HepG2 (cell line): ENCODE measurements at regions of chr3 and their contacts with region 1.

Region 1: DNA sequence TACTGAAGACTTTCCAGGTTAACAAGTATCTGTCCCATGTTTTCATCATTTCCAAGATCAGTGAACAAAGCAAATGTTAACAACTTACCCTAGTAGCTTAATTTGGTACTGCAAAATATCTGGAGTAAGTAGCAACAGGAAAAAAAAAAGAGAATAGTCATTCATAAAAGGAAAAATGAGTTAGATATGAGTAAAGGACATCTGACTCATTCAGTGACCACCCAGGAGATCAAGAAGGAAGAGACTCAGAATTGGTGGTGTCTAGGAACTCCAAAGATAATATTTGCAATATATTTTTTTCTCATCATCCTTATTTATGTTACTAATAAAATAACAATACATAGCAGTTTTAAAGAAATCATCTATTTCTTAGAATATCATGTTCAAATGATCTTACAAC is 253.8 kb upstream of the COL8A1 start:
- DNase-seq: no peak
- ATAC-seq: no peak
- H3K4me3 ChIP-seq: no peak overlapping the region
- H3K27ac ChIP-seq: no peak overlapping the region
- H3K4me1 ChIP-seq: no peaks in the 10 kb centered on the region
- H3K27me3 ChIP-seq: no peaks in the 10 kb centered on the region
- CTCF ChIP-seq: no peak
- EP300 ChIP-seq: no peak
- POLR2A ChIP-seq: no peak
- RAD21 ChIP-seq: no peak

Region 2: DNA sequence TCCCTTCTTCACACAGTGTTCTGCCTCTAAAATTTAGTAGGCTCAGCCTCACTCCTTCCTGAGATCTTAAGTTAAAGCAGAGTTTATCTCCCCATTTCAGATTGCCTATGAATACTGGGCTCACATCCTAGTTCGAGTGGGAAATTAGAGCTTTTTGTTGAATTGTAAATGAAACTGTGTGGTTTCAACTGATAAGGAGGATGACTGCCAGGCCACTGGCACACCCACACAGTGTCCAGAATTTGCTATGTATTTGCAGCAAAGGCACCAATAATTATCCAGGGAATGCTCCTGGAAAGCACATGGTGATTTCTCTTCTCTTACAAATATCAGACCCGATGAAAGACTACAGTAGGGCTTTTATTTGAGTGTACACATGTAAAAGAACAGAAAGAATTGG is 54.3 kb before region 1 on chr3:
- CTCF ChIA-PET with region 1: no interaction called
- POLR2A ChIA-PET with region 1: no interaction called
- in situ Hi-C with region 1: no loop called
- intact Hi-C with region 1: loop called (anchors 2 kb)
- DNase-seq: no peak
- ATAC-seq: no peak
- H3K4me3 ChIP-seq: no peak overlapping the region
- H3K27ac ChIP-seq: no peak overlapping the region
- H3K4me1 ChIP-seq: no peaks in the 10 kb centered on the region
- H3K27me3 ChIP-seq: no peaks in the 10 kb centered on the region
- CTCF ChIP-seq: no peak
- EP300 ChIP-seq: no peak
- POLR2A ChIP-seq: no peak
- RAD21 ChIP-seq: no peak

Region 3: GRCh38 chr3:99366663-99367429 is 17.8 kb before region 1 on chr3:
- CTCF ChIA-PET with region 1: no interaction called
- POLR2A ChIA-PET with region 1: no interaction called
- in situ Hi-C with region 1: no loop called
- intact Hi-C with region 1: no loop called
- DNase-seq: no peak
- ATAC-seq: peak; percentile 68
- H3K4me3 ChIP-seq: no peak overlapping the region
- H3K27ac ChIP-seq: no peak overlapping the region
- H3K4me1 ChIP-seq: no peaks in the 10 kb centered on the region
- H3K27me3 ChIP-seq: no peaks in the 10 kb centered on the region
- CTCF ChIP-seq: no peak
- EP300 ChIP-seq: no peak
- POLR2A ChIP-seq: no peak
- RAD21 ChIP-seq: no peak

Region 4: GRCh38 chr3:99418209-99418635 is 33.6 kb after region 1 on chr3:
- CTCF ChIA-PET with region 1: no interaction called
- POLR2A ChIA-PET with region 1: no interaction called
- in situ Hi-C with region 1: no loop called
- intact Hi-C with region 1: no loop called
- DNase-seq: no peak
- ATAC-seq: no peak
- H3K4me3 ChIP-seq: no peak overlapping the region
- H3K27ac ChIP-seq: no peak overlapping the region
- H3K4me1 ChIP-seq: no peaks in the 10 kb centered on the region
- H3K27me3 ChIP-seq: no peaks in the 10 kb centered on the region
- CTCF ChIP-seq: no peak
- EP300 ChIP-seq: no peak
- POLR2A ChIP-seq: no peak
- RAD21 ChIP-seq: no peak